ENCODE measurements at regions of chr6 and their contacts with region 1.

Region 1: GRCh38 chr6:142207265-142207877 is 60.3 kb downstream of the VTA1 start:
- DNase-seq: peak; percentile 59
- ATAC-seq: peak; percentile 99
- H3K4me3 Mint-ChIP-seq: no peak overlapping the region
- H3K27ac Mint-ChIP-seq: 0 out of 2 replicates have a peak overlapping the region, but pooled peaks have one; percentile 64
- H3K4me1 Mint-ChIP-seq: no peaks in the 10 kb centered on the region
- H3K27me3 Mint-ChIP-seq: no peaks in the 10 kb centered on the region
- CTCF ChIP-seq: peak; percentile 85

Region 2: DNA sequence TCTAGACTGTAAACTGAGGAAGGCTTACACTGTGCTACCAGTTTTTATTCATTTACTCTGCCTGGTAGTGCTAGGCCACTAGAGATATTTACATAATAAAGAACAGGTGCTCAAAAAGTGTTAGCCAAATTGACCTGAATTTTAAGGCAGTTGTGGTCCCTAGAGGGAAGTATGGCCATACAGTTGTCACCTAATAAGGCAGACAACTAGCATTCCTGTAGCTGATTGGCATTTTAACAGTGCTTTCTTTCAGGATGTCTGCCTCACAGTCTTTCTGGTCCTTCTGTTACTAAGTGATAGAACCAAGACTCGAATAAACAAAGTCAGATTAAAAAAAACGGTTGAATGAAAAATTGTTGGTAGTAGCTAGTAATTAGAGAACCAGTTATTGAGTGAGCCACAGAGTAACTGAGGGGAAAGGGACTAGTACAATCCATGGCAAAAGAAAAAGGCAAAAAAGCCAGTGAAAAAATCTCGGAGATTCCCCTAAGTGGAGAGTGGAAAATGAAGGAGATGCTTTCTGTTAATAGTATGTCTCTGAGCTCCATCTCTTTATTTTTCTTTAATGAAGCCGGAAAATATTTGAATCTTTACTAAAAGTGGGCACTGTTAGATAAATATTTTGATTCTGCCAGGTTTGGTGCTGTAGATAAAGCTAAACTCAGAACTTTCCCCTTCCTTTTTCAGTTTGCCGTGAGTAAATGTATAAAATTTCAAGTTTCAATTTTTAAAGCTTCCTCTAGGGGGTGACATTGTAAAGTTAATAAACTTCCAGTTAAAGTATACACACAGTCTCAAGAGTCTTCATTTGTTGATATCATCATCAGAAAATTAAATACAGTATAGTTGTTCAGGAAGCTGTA is 51.2 kb before region 1 on chr6:
- CTCF ChIA-PET with region 1: interaction called, 16 read pairs
- POLR2A ChIA-PET with region 1: no interaction called
- DNase-seq: no peak
- ATAC-seq: peak; percentile 93
- H3K4me3 Mint-ChIP-seq: peak overlapping the region; percentile 52
- H3K27ac Mint-ChIP-seq: peak overlapping the region; percentile 97
- H3K4me1 Mint-ChIP-seq: peaks cover 44% of the 10 kb centered on the region
- H3K27me3 Mint-ChIP-seq: no peaks in the 10 kb centered on the region
- CTCF ChIP-seq: peak; percentile 41; the same call in 1 of the 2 replicates

Measured in WTC11 (cell line).